BJ (cell line): ENCODE measurements at regions of chr10 and their contacts with region 1.

Region 1: GRCh38 chr10:16863766-16864165 is 46.5 kb upstream of the RSU1 start:
- DNase-seq: no peak
- H3K4me3 ChIP-seq: no peak overlapping the region
- H3K27me3 ChIP-seq: no peaks in the 10 kb centered on the region
- CTCF ChIP-seq: no peak

Region 2: GRCh38 chr10:16458166-16458955 is 405.4 kb before region 1 on chr10:
- CTCF ChIA-PET with region 1: no interaction called
- POLR2A ChIA-PET with region 1: no interaction called
- DNase-seq: no peak
- H3K4me3 ChIP-seq: no peak overlapping the region
- H3K27me3 ChIP-seq: no peaks in the 10 kb centered on the region
- CTCF ChIP-seq: no peak

Region 3: DNA sequence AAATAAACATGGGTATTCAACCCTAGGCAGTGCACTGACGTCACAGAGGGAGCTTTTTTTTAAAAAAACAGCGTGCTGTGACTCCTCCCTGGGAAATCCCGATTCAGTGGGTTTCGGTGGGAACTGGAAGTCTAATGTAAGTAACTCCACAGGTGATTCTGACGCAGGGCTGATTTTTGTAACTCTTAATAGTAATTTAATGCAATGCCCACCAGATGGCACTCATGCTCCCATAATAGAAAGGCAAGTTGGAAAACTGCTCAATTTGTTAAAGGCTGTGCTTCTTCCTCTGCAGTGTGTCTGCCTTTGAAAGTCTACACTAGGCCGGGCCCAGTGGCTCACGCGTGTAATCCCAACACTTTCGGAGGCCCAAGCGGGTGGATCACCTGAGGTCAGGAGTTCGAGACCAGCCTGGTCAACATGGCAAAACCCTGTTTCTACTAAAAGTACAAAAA is 35.6 kb before region 1 on chr10:
- CTCF ChIA-PET with region 1: no interaction called
- POLR2A ChIA-PET with region 1: no interaction called
- DNase-seq: no peak
- H3K4me3 ChIP-seq: no peak overlapping the region
- H3K27me3 ChIP-seq: no peaks in the 10 kb centered on the region
- CTCF ChIP-seq: peak; percentile 57

Region 4: DNA sequence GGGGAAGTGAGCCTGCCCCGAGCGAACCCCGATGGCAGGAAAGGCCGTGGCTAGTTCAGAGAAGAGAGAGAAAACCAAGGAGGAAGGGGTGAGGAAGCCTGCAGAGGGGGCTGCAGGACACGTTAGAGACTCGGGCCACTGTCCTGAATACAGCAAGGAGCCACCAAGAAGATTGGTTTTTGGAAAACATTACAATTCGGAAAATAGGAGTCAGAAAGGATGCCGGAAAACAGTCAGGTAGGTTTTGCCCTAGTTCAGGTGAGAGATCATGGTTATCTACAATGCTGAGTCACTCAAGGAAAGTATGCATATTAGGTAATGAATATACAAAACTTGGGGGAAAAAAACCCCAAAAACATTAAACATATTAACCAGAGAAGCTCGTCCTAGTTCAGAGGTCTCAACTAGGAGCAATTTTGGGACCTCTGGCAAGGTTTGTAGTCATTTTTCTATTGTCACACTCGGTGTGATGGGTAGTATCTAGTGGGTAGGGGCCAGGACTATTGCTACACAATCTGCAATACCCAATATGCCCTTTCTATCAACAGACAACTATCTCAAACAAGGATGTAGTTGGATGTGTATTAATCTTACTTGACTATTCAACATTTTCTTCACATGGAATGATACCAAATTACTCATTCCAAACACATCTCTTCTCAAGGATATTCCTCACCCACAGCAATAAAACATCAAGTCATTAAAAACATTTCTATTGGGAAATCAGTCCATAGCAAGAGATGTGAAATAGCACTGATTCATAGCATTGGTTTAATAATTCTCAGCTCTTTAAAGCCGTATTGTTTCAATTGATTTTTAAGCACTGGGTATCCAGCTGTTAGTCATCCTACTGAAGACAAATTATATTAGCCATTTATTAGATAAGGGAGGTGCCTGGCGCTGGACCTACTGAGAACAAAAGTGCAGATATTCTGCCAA is 27.9 kb after region 1 on chr10:
- CTCF ChIA-PET with region 1: no interaction called
- POLR2A ChIA-PET with region 1: interaction called, 12 read pairs
- DNase-seq: peak; percentile 88
- H3K4me3 ChIP-seq: no peak overlapping the region
- H3K27me3 ChIP-seq: 0 out of 2 replicates have a peak, but pooled peaks cover 2% of the 10 kb centered on the region
- CTCF ChIP-seq: peak; percentile 40